ENCODE measurements at regions of chr16 and their contacts with region 1.

Region 1: DNA sequence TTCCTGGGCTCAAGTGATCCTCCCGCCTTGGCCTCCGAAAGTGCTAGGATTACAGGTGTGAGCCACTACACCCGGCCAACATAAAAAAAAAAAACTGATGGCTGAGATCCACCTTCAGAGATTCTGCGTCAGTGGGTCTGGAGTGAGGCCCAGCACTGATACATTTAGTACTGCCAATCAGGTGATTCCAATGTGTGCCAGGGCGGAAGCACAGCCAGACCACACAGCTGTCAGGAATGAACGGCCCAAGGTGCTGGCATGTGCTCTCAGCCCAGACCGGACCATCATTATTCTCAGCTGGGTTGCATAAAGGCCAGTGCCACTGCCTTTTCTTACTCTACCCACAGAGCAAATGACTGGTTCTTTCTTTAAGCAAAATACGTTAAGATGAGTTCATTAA is 1.2 kb upstream of the BCO1 start:
- DNase-seq: peak; percentile 80

Region 2: GRCh38 chr16:80954985-80955384 is 282.3 kb before region 1 on chr16:
- intact Hi-C with region 1: no loop called
- DNase-seq: no peak

Region 3: DNA sequence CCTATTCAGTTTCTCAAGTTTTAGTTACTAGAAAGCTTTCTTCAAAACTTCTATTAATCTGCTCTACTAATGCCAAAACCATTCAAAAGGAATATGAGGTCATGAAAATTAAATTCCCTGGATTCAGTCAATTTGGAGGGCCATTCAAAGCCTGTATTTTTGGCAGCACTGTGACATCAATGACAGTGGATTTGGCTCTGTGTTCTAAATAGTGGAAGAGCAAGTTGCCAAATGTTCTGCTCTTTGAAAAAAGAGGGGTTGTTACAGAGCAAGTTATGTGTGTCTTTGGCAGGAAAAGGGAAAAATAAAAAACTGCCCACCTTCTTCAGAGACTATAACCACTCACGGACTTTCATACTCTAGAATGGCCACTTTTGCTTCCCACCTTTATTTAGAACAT is 157.0 kb before region 1 on chr16:
- intact Hi-C with region 1: no loop called
- DNase-seq: no peak

Region 4: DNA sequence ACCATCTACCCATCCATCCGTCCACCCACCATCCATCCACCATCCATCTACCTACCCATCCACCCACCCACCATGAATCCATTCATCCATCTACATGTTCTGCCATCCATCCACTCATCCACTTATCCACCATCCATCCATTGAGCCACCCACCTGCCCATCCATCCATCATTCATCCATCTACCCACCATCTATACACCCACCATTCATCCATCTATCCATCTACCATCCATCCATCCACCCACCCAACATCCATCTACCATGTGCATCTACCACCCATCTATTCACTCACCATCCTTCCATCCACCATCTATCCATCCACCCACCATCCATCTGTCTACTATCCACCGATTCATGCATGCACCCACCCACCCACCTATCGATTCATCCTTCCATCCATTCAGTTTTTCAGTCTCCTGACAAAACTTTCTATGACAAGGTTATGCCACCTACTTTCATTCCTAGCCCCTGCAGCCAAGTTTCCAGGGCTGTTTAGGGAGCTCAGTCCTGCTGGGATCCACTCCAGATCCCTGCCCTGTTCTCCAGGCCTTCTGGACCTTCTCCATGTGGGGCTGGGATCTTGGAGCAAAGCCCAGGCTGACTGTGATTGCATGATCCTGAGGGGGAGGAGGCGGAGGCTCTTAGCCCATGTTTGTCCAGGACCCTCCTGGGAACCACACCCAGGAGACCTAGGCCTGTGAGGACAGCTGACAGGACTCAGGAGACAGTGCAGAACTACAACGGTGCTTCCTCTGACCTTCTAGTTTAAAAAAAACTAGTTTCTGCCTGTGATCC is 28.6 kb after region 1 on chr16:
- intact Hi-C with region 1: loop called (anchors 1 kb)
- DNase-seq: peak; percentile 90